ENCODE measurements at regions of chr6 and their contacts with region 1.

Region 1: DNA sequence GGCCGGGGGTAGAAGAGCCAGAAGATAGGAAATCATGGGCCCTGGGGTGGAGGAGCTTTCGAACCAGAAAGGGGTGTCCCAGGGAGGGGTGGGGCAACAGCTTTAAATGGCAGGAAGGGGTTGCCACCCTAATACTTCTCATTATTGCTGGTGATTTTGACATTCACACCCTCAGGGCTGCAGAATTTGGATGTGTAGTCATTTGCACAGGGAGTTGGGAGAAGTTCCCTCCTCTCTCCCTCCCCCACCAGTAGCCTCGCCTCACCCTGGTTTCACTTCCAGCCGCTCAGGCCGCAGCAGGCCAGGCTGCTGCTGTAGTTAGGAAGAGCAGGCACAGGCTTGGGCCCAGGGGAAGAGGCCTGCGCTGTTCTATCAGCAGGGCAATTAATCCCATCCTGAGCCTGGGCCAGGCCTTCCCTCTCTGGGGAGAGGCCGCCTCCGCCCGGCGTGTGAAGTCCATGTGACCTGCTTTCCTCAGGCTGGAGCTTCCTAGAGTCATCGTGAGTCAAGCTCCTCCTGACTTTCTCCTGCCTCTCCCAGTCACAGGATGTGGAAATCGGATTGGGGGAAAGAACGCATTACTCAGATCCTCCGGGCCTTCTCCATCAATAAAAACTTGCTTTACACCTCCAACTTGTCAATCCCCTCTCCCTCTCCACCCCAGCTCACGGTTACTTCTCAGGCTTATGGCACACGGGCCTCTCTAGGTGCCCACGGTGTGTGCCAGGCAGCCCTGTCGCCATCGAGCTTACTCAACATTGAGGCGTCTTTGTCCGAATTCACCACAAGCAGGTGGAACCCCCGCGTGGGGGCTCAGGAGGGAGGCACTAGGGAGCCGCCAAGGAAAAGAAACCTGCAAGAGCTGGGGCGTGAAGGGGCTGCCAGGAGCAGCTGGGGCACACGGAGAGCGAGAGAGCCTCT is 7.8 kb downstream of the ADTRP start:
- DNase-seq: peak in 1 of 2 donors; percentile 99
- H3K4me3 ChIP-seq: no peak overlapping the region
- H3K27ac ChIP-seq: peak overlapping the region; percentile 95
- H3K4me1 ChIP-seq: peaks cover 59% of the 10 kb centered on the region
- H3K27me3 ChIP-seq: no peaks in the 10 kb centered on the region
- CTCF ChIP-seq: no peak
- POLR2A ChIP-seq: no peak

Region 2: DNA sequence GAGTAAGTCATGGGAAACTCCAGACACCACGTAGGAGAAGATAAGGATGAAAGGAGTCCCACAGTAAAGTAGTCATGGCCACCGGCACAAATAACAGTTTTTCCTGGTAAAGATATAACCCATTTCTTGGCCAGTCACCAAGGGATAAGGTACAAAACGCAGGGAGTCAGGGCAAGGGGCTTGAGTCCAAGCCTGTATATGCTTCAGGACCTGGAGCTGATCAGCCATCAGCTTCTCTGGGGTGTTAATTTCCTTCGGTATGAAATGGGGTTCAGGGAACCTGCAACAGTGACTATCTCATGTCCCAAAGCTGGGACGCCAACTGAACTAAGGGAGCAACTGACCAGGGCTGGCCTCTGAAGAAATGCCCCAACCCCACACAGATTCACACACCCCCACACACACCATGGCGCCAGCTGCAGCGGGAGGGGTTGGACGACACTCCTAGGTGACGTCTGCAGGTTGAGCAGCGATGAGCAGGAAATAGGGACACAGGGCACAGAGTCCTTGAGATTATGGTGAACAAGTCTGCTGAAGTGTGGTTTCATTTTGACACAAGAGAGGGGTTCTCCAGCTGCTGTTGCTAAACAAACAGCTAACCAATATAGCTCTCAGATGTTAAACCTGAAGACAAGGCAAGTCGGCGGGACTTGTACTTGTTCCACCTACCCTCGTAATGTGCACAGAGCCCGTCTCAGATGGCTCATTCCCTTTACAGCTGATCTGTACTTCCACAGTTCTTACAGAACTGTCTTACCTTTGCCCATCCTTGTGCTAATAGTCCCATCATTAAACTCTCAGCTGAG is 15.2 kb after region 1 on chr6:
- intact Hi-C with region 1: loop called (anchors 1 kb)
- DNase-seq: no peak
- H3K4me3 ChIP-seq: no peak overlapping the region
- H3K27ac ChIP-seq: no peak overlapping the region
- H3K4me1 ChIP-seq: no peaks in the 10 kb centered on the region
- H3K27me3 ChIP-seq: no peaks in the 10 kb centered on the region
- CTCF ChIP-seq: no peak
- POLR2A ChIP-seq: no peak

Region 3: GRCh38 chr6:11814106-11814505 is 43.3 kb after region 1 on chr6:
- intact Hi-C with region 1: loop called (anchors 1 kb)
- DNase-seq: no peak
- H3K4me3 ChIP-seq: no peak overlapping the region
- H3K27ac ChIP-seq: no peak overlapping the region
- H3K4me1 ChIP-seq: peaks cover 47% of the 10 kb centered on the region
- H3K27me3 ChIP-seq: no peaks in the 10 kb centered on the region
- CTCF ChIP-seq: no peak
- POLR2A ChIP-seq: no peak

Region 4: DNA sequence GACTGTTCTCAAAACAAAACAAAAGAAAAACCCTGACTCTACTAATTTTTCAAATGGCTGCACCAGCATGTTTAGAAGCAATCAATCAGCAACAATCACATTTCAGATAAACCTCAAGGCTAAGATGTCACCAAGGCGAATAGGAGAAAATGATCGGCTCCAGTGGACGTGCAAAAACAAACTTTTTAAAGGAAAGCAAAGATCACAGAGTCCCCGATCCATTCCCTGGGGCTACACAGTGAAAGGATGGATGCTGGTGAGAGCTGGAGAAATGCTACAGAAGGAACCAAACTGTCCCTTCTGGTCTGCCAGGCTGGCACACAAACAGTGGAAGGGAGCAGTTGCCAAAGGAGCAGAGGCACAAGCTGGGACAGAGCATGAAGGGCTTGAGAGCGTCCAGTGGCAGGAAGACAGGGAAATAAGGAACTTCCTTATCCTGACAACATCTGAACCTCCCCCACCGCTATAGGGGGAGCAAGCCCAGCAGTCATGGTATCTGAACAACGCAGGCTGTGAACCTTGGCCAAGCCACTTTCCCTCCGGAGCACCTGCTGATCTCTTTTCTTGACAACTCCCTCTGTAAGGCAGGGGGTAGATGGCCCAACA is 167.6 kb after region 1 on chr6:
- intact Hi-C with region 1: no loop called
- DNase-seq: no peak
- H3K4me3 ChIP-seq: no peak overlapping the region
- H3K27ac ChIP-seq: no peak overlapping the region
- H3K4me1 ChIP-seq: peaks cover 8% of the 10 kb centered on the region
- H3K27me3 ChIP-seq: no peaks in the 10 kb centered on the region
- CTCF ChIP-seq: no peak
- POLR2A ChIP-seq: no peak

Measured in vagina (tissue), 2 donors.